ENCODE measurements at regions of chr12 and their contacts with region 1.

Region 1: DNA sequence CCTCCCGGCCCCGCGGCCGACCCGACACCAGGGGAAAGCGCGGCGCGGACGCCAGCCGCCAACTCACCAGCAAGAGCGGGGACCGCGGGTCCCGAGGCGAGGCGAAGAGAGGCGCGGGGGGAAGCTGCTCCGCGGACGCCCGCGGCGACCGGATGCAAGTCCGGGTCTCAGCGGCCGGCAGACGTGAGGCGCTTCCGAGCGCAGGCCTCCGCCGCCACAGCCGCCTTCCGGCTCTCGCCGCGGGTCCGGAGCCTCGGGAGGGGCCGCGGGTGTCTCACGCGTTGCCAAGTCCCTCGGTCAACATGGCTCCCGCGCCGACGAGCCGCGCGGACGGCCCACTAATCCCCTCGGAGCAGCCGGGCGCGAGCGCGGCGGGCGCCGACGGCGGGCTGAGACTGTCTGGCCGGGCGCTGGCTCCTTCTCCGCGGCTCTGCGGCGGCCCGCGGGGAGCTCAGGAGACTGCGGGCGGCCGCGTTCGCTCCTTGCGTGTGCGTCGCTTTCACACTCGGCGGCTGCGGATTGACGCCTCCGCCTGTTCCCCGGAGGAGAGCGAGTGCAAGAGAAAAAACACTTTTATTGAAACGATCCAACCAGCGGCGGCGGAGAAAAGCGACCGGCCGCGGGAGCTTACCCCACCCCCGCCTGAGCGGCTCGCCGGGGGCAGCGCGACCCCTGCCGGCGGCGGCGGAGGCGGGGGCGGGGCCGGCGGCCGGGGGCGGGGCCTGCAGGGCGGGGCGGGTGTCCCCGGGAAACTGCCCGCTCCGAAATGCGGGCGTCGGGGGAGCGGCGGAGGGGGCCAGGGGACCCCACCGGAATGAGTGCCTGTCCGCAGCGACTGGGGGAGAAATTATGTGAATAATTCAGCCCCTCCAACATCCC is at the start of gene CDK17:
- DNase-seq: peak; percentile 89 to 94
- ATAC-seq: peak; percentile 94
- H3K4me3 ChIP-seq: peak within 1 kb of the TSS; percentile 86 to 95
- H3K27ac ChIP-seq: peak within 1 kb of the TSS; percentile 88 to 98
- H3K4me1 ChIP-seq: no peaks in the 10 kb centered on the region
- H3K27me3 ChIP-seq: no peaks in the 10 kb centered on the region
- total RNA-seq, gene CDK17: 41.5 to 69.7 TPM

Region 2: DNA sequence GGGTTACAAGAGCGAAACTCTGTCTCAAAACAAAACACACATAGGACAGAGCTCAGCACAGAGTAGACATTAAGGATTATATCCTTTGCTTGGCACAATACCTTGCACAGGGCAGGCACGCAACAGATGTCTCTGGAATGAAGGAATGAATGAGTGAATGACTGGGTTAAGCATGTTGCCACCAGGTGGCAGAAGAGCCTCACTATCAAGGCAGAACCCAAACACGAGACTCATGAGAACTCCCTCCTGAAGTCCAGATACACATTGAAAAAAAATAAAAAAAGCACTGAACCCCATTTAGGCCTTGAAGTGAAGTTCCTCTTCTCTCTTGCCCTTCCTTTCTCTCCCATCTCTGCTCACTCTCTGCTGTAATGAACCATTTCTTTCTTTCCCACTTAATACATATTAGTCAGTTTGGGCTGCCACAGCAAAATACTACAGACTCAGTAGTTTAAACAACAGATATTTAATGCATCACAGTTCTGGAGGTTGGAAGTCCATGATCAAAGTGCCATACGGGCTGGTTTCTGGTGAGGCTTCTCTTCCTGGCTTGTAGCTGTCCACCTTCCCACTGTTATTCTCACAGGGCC is 338.2 kb before region 1 on chr12:
- intact Hi-C with region 1: loop called in 1 of 2 experiments (anchors 10 kb)
- DNase-seq: peak; percentile 81 to 83
- ATAC-seq: peak; percentile 90
- H3K4me3 ChIP-seq: no peak overlapping the region
- H3K27ac ChIP-seq: no peak overlapping the region
- H3K4me1 ChIP-seq: no peaks in the 10 kb centered on the region
- H3K27me3 ChIP-seq: no peaks in the 10 kb centered on the region

Region 3: DNA sequence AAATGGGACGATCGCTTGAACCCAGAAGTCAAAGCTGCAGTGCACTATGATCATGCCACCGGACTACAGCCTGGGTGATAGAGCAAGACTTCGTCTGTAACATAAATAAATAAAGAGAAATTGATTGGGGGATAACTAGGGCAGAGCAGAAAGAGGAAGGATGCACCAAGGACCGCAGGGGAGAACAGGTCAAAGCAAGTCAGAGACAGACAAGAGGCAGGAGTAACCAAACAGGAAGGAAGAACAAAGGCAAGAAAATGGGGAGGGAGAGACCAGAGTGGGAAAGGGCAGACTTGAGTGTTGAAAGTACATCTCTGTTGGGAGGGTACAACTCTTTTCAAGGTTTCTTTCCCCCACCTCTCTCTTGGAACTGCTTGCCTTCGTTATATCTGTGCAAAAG is 256.8 kb before region 1 on chr12:
- intact Hi-C with region 1: no loop called
- DNase-seq: no peak
- ATAC-seq: peak; percentile 26
- H3K4me3 ChIP-seq: no peak overlapping the region
- H3K27ac ChIP-seq: no peak overlapping the region
- H3K4me1 ChIP-seq: no peaks in the 10 kb centered on the region
- H3K27me3 ChIP-seq: no peaks in the 10 kb centered on the region

Region 4: GRCh38 chr12:96208801-96209549 is 191.2 kb before region 1 on chr12:
- intact Hi-C with region 1: loop called in 1 of 2 experiments (anchors 5 kb)
- DNase-seq: no peak
- ATAC-seq: no peak
- H3K4me3 ChIP-seq: no peak overlapping the region
- H3K27ac ChIP-seq: no peak overlapping the region
- H3K4me1 ChIP-seq: no peaks in the 10 kb centered on the region
- H3K27me3 ChIP-seq: no peaks in the 10 kb centered on the region

Region 5: GRCh38 chr12:96219698-96220206 is 180.4 kb before region 1 on chr12:
- intact Hi-C with region 1: loop called in 1 of 2 experiments (anchors 5 kb)
- DNase-seq: peak; percentile 59 to 75
- ATAC-seq: no peak
- H3K4me3 ChIP-seq: no peak overlapping the region
- H3K27ac ChIP-seq: no peak overlapping the region
- H3K4me1 ChIP-seq: no peaks in the 10 kb centered on the region
- H3K27me3 ChIP-seq: no peaks in the 10 kb centered on the region

Region 6: DNA sequence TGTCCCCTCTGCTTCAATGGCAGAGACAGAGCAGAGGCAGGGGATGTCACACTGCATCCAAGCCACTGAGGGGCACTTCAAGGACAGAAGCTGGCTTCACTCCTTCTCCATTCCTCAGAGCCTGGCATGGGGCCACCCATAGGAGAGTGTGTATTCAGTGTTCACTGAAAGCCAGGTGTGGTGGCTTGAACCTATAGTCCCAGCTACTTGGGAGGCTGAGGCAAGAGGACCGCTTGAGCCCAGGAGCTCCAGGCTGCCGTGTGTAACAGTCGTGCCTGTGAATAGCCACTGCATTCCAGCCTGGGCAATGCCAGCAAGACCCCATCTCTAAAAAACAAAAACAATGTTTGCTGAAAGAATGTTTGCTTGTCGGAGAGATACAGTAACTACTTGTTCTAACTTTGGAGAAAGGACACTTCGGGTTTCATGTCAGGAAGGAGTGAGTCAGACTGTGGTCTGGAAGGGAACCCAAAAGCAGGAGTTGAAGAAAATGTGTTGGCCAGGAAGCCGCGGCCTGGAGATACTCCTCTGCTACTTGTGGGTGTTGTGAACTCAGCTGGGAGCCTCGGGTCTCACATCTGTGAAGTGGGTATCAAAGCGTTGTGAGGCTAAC is 162.6 kb before region 1 on chr12:
- intact Hi-C with region 1: loop called (anchors 2 to 10 kb)
- DNase-seq: peak; percentile 83 to 87
- ATAC-seq: peak; percentile 43
- H3K4me3 ChIP-seq: no peak overlapping the region
- H3K27ac ChIP-seq: no peak overlapping the region
- H3K4me1 ChIP-seq: peaks cover 0 to 2% of the 10 kb centered on the region in 2 donors
- H3K27me3 ChIP-seq: no peaks in the 10 kb centered on the region

Region 7: GRCh38 chr12:96294831-96295230 is 105.3 kb before region 1 on chr12:
- intact Hi-C with region 1: loop called in 1 of 2 experiments (anchors 10 kb)
- DNase-seq: no peak
- ATAC-seq: no peak
- H3K4me3 ChIP-seq: no peak overlapping the region
- H3K27ac ChIP-seq: no peak overlapping the region
- H3K4me1 ChIP-seq: no peaks in the 10 kb centered on the region
- H3K27me3 ChIP-seq: no peaks in the 10 kb centered on the region

Region 8: GRCh38 chr12:96516472-96517430 is 116.6 kb after region 1 on chr12:
- intact Hi-C with region 1: loop called in 1 of 2 experiments (anchors 10 kb)
- DNase-seq: peak; percentile 82 to 88
- ATAC-seq: peak; percentile 74
- H3K4me3 ChIP-seq: no peak overlapping the region
- H3K27ac ChIP-seq: no peak overlapping the region
- H3K4me1 ChIP-seq: no peaks in the 10 kb centered on the region
- H3K27me3 ChIP-seq: no peaks in the 10 kb centered on the region

Region 9: DNA sequence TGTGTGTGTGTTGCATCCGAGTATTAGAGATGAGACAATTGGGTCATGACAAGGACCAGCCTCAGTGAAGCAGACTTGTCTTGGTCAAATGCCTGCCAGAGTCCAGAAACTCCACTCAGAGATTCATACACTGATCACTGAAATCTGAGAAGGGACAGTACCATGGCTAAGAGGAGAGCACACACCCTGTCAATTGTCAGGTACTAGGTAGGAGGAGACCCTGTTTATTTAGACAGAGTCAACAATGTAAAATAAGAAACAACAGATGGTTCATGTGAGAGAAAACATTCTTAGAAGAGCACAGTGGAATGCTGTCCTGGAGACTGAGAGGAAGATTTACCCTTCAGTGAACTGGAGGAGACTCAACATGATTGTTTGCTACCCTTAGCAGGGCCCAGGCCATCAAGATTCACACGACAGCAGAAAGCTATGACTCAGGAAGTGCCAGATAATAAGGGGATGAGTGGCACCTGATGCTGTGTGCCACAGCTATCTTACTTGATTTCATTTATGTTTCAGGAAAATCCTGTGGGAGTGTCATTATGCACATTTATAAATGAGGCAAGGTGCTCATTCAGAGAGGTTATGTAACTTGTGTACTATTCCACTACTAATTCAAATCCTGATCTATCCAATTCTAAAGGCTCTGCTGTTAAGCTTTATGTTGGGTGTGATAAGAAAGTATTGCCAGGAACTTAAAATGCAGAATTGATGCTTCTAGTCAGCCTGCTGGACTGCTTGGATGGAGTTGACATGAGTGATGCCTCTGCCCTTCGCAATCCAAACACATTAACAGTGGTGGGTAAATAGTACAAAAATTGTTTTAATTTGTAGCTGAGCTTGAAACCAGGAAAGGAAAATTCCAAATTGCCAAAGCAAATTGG is 370.3 kb after region 1 on chr12:
- intact Hi-C with region 1: no loop called
- DNase-seq: no peak
- ATAC-seq: no peak
- H3K4me3 ChIP-seq: no peak overlapping the region
- H3K27ac ChIP-seq: no peak overlapping the region
- H3K4me1 ChIP-seq: no peaks in the 10 kb centered on the region
- H3K27me3 ChIP-seq: peaks cover 0 to 1% of the 10 kb centered on the region in 2 donors